Esophagus squamous epithelium (tissue), 5 donors: ENCODE measurements at regions of chr3 and their contacts with region 1.

Region 1: GRCh38 chr3:167380004-167380689 is at the start of gene ZBBX:
- DNase-seq: peak; percentile 11
- H3K4me3 ChIP-seq: peak within 1 kb of the TSS; percentile 21 to 63 (median 38)
- H3K27ac ChIP-seq: no peak within 1 kb of the TSS
- H3K4me1 ChIP-seq: peaks cover 0 to 12% (median 3%) of the 10 kb centered on the region in 3 donors
- H3K27me3 ChIP-seq: no peaks in the 10 kb centered on the region
- CTCF ChIP-seq: peak; percentile 22 to 94 (median 82)
- POLR2A ChIP-seq: no peak
- total RNA-seq, gene ZBBX: not detected

Region 2: GRCh38 chr3:167684388-167684993 is 304.3 kb after region 1 on chr3:
- intact Hi-C with region 1: loop called (anchors 5 kb)
- DNase-seq: no peak
- H3K4me3 ChIP-seq: no peak overlapping the region
- H3K27ac ChIP-seq: no peak overlapping the region
- H3K4me1 ChIP-seq: no peaks in the 10 kb centered on the region
- H3K27me3 ChIP-seq: no peaks in the 10 kb centered on the region
- CTCF ChIP-seq: peak; percentile 47 to 83 (median 66)
- POLR2A ChIP-seq: no peak